Mammary epithelial cell (primary cell): ENCODE measurements at regions of chr14 and their contacts with region 1.

Region 1: GRCh38 chr14:75002392-75003249 is at the start of gene EIF2B2:
- DNase-seq: peak; percentile 99
- H3K4me3 ChIP-seq: peak within 1 kb of the TSS; percentile 69 to 89 (median 80)
- H3K27ac ChIP-seq: peak within 1 kb of the TSS; percentile 87
- H3K4me1 ChIP-seq: peaks cover 18% of the 10 kb centered on the region
- H3K27me3 ChIP-seq: no peaks in the 10 kb centered on the region
- CTCF ChIP-seq: peak in 1 of 2 donors; percentile 13
- total RNA-seq, gene EIF2B2: 47.8 to 57.3 TPM

Region 2: GRCh38 chr14:74955229-74956026 is 47.2 kb before region 1 on chr14 and contains the start of gene PGF:
- CTCF ChIA-PET with region 1: no interaction called
- dilution Hi-C with region 1: no loop called
- in situ Hi-C with region 1: no loop called
- intact Hi-C with region 1: loop called (anchors 1 kb)
- DNase-seq: peak; percentile 44
- H3K4me3 ChIP-seq: peak within 1 kb of the TSS; percentile 65 to 78 (median 66)
- H3K27ac ChIP-seq: peak within 1 kb of the TSS; percentile 32
- H3K4me1 ChIP-seq: peaks cover 36% of the 10 kb centered on the region
- H3K27me3 ChIP-seq: no peaks in the 10 kb centered on the region
- CTCF ChIP-seq: no peak
- total RNA-seq, gene PGF: 16.5 to 31.9 TPM

Region 3: DNA sequence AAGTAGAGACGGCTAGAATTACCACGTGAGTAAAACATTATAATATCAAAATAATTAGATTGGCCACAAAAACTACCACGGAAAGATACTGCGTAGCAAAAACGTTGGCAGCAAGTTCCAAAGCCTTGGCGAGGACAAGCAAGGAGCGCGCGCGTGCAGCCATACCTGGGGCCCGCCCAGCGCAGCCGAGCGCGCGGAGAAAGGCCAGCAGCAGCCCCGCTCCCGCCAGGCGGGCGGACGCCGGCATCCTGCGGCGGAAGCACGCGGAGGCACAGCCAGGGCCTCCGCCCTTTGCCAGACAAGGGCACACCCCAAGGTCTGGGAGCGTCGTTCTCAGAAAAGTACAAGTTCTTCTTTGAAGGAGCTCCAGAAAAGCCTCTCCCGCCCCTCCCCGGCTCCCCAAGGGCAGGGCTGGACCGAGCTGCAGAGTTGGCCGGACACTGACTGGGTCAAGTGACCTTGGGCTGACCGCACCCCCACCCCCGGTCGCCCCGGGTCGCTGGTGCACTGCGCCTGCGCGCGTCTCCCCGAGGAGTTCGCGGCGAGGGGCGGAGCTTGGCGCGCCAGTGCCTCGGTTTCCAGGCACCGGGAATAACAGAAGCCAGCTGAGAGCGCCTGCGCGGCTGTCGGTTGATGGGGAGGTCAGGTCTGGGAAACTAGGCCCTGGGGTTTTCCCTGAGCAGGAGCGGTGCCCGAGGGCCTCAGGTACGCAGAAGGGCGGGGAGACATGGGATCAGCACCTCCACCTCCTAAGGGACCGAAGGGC is 66.6 kb after region 1 on chr14 and contains the start of gene ZC2HC1C:
- CTCF ChIA-PET with region 1: no interaction called
- dilution Hi-C with region 1: no loop called
- in situ Hi-C with region 1: no loop called
- intact Hi-C with region 1: loop called (anchors 5 kb)
- DNase-seq: peak; percentile 78
- H3K4me3 ChIP-seq: peak within 1 kb of the TSS; percentile 50 to 64 (median 56)
- H3K27ac ChIP-seq: peak within 1 kb of the TSS; percentile 75
- H3K4me1 ChIP-seq: peaks cover 22% of the 10 kb centered on the region
- H3K27me3 ChIP-seq: no peaks in the 10 kb centered on the region
- CTCF ChIP-seq: no peak
- total RNA-seq, gene ZC2HC1C: 0.17 to 0.89 TPM

Region 4: DNA sequence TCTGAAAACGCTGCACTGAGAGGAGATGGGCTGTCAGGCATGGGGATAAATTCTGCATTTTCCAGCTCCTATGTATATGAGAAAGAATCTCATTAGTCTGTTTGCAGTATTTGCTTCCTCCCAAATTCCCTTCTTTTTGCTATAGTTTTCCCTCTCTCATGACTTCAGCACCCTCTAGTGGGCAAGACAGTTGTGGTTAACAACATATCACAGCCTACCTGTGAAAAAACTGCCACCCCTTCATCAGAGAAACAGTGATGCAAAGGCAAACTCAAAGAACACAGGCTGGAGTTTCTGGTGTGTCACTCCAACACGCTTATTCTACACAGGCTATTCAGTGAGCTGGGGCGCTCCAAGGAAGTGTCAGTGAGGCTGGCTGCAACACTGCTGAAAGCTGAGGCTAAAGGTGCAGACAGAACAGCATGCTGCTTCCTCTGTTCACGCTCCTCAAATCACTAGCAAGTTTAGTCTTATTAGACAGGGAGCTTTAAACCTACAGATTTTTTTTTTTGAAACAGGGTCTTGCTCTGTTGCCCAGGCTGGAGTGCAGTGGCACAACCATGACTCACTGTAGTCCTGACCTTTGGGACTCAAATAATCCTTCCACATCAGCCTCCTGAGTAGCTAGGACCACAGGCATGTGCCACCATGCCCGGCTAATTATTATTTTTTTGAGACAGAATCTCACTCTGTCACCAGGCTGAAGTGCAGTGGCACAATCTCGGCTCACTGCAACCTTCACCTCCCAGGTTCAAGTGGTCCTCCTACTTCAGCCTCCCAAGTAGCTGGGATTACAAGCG is 86.2 kb after region 1 on chr14:
- CTCF ChIA-PET with region 1: no interaction called
- dilution Hi-C with region 1: no loop called
- in situ Hi-C with region 1: no loop called
- intact Hi-C with region 1: loop called (anchors 5 kb)
- DNase-seq: peak; percentile 52
- H3K4me3 ChIP-seq: no peak overlapping the region
- H3K27ac ChIP-seq: no peak overlapping the region
- H3K4me1 ChIP-seq: peaks cover 3% of the 10 kb centered on the region
- H3K27me3 ChIP-seq: no peaks in the 10 kb centered on the region
- CTCF ChIP-seq: peak; percentile 77 to 82